AG04450 (cell line): ENCODE measurements at regions of chr11 and their contacts with region 1.

Region 1: DNA sequence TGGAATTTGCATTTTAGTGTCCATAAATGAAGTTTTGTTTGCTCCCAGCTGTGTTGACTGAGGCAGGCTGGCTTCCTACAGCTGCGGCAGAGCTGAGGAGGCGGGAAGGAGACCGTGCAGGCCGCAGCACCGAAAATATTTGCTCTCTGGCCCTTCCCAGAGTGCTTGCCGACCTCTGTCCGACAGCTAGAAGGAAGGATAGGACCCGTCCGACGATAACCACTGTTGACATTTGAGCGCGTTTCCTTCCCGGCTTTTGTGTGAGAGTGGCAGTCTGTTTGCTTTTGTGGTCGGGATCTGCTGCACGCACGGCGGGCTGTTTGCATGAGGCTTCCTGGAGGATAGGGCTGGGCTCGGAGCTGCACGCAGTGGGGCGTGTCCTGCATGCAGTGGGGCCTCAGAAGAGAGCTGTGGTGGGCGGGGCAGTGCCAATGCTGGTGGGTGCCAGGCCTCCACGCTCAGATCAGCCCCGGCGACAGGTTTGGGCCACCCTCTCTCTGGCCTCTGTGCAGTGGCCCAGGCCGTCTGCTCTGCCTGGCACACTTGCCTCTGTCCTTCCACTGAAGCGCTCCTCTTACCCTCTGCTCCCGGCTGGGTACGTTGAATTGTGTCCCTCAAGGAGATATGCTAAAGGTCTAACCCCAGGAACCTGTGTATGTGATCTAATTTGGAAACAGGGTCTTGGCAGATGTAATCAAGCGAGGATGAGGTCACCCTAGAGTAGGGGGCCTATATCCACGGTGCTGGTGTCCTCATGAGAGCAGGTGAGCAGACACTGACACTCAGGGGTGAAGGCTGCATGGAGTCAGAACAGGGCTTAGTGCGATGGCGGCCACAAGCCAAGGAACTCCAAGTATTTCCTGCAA is 68.1 kb downstream of the LRP5 start:
- DNase-seq: peak; percentile 86
- H3K4me3 ChIP-seq: no peak overlapping the region
- H3K27ac ChIP-seq: peak overlapping the region; percentile 61
- H3K27me3 ChIP-seq: no peaks in the 10 kb centered on the region
- CTCF ChIP-seq: no peak

Region 2: DNA sequence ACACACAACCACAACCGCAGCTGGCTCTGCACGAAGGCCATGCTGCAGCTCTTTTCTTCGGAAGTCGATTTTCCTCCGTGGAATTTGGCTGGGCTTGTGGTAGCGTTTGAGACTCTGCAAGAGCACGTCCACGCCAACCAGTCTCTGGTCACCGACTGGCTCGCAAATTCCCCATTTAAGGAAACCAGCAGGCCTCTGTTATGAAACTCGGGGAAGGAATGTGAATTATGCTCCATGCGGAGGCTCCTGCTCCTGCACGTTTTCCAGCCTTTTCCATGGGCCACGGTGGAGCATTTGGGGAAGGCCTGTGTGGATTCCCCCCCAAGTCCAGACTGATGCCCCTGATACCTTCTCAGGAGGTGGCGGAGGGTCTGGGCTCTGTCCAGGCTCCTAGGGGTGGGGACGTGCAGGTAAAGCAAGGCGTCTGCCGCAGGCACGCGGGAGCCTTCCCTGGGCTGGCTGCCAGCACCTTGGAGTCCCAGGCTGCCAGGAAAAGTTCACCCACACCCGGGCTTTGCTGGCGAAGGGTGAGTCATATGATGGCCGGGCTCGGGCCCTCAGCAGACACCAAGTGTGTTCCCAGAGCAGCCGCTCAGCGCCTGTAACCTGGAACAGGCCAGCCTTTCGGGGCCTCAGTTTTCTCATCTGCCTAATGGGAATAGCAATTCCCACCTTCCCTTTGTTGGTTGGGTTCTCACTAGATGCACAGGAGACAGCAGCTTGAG is 26.2 kb before region 1 on chr11:
- CTCF ChIA-PET with region 1: interaction called, 5 read pairs
- POLR2A ChIA-PET with region 1: interaction called, 10 read pairs
- DNase-seq: peak; percentile 85
- H3K4me3 ChIP-seq: no peak overlapping the region; the same call in 1 of the 2 replicates
- H3K27ac ChIP-seq: peak overlapping the region; percentile 93
- H3K27me3 ChIP-seq: no peaks in the 10 kb centered on the region
- CTCF ChIP-seq: no peak